Activated T-helper 2 cell treated with anti-CD3 and anti-CD28 coated beads, Interferon-gamma antibody, Interleukin-2, Interleukin-4, amounts not matched to agents 10 μg/mL and 5 μg/mL and 100 μg/mL, durations not matched to agents 14 hours and 24 hours and 36 hours (primary cell): ENCODE measurements at regions of chrX and their contacts with region 1.

Region 1: DNA sequence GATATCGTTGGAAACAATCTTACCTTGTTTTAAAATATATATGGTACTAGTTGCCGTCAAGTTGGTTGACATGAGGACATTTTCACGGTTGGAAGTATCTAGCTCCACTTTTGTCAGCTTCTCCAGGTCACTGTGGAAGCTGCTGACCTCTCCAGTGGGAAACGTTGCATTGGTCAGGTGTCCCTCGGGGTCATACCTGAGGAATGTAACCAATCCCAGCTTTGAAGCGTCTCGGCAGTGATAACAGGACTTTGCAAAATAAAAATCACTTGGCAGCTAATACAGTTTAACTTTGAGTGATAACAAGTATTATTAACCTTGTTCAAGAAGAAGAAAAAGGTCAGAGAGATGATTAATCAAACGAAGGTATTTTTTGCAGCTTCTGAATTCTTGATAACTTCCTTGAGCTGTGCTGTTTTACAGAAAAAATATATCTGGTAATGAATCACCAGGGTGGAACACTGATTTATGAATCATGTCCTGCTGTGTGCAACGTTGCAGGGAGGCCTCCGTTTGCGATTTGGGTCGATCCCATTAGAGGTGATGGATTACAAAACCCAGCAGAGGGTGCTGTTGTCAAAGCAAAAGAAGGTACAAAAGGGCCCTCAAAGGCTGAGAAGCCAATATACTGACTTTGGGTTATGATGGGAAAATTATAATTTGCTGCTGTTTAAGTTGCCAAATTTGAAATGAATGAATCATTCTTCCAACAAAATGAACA is 60.1 kb downstream of the SH2D1A start:
- DNase-seq: peak; percentile 33
- H3K4me3 Mint-ChIP-seq: no peak overlapping the region
- H3K27ac Mint-ChIP-seq: no peak overlapping the region
- H3K4me1 Mint-ChIP-seq: peaks cover 12% of the 10 kb centered on the region
- H3K27me3 Mint-ChIP-seq: no peaks in the 10 kb centered on the region

Region 2: DNA sequence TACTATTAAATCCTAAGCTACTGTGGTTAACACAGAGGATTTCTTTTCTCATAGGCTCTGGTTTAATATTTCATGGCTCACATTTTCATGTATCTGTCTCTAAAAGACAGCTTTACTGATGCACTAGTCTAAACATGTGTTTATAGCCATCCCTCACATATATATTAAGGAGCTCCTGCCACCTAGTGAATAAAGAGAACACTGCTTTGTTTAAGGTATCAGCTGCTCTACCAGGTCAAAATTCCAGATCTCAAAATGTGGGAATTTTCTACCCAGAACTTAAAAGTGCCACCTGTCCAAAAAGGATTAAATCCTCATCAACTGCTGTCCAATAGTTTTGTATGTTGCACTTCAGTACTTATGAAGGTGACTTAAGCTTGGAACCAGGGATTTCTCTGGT is 724.7 kb after region 1 on chrX:
- intact Hi-C with region 1: loop called (anchors 1 kb)
- DNase-seq: no peak
- H3K4me3 Mint-ChIP-seq: no peak overlapping the region
- H3K27ac Mint-ChIP-seq: no peak overlapping the region
- H3K4me1 Mint-ChIP-seq: no peaks in the 10 kb centered on the region
- H3K27me3 Mint-ChIP-seq: no peaks in the 10 kb centered on the region